Endothelial cell of umbilical vein (primary cell): ENCODE measurements at regions of chr3 and their contacts with region 1.

Region 1: DNA sequence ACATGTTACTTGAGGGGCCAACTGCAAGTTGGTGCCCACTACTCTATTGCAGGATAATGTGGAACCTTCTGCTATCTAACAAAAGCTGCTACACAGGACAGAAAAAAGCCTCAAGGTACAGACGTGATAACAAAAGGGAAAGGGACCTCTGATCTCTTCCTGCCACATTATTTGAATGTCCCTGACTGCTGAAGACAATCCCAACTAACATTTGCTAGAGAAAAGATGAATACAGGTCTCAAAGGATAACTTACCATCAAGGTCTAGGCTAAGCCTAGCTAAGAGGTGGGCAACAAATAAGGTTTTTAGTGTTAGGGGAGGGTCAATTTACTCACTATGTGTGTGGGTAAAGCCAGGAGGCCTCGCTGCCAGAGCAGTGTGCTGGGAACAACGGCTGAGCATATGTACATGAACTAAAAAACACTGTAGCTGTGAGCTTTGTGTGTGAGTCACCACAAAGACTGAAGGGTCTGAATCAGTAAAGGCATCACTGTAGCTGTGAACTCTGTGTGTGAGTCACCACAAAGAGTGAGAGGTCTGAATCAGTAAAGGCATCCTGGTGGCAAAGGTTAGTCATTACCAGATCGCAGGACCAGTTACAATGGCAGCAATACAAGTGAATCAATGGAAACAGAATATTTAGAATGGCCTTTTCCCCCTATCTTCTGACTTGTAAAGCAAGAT is 111.7 kb downstream of the LMLN start:
- DNase-seq: peak; percentile 79
- H3K4me3 ChIP-seq: no peak overlapping the region
- H3K27ac ChIP-seq: no peak overlapping the region
- H3K4me1 ChIP-seq: no peaks in the 10 kb centered on the region
- H3K27me3 ChIP-seq: peaks cover 13 to 36% of the 10 kb centered on the region in 2 experiments
- CTCF ChIP-seq: peak in 1 of 2 donors; percentile 20
- POLR2A ChIP-seq: no peak

Region 2: DNA sequence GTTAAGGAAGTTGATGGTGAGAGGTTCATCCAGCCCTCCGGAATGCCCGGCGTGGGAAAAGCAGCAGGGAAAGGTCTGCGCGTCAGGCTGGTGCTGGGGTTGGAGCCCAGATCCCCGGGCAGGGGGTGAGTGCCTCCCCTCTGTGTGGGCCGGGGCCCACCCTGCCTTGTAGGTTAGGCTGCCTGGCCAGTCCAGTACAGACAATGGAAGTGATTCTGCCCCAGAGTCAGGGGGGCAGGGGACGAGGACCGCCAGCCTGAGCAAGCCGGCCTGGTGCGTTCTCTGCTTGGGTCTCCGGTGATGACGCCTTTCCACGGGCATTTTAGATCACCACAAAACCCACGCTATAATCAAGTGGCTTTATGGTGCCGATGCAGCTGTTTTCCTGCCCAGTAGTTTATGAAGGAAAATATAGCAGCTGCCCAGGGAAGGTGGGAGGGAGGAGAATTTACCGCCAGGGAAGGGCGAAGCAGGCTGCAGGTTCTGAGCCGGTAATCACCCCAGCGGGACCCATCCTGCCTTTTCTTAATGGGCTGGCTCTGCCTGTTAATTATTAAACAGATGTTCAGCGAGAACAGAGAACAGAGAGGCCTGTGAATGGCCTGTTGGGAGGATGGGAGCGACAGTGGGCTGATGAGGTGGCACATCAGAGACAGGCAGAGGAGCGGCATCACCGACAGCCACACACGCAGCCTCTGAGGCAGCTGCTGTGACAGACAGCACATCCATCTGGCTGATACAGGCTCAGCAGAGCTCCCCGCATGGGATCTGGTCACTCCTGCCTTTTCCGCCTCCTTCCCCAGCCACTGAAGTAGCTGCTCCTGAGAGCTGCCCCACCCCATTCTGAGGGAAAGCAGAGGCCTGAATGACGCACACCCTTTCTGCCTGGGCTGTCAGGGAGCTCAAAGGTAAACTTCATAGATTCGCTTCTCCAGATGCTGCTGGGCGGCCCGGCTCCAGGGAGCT is 551.1 kb before region 1 on chr3:
- CTCF ChIA-PET with region 1: no interaction called
- POLR2A ChIA-PET with region 1: no interaction called
- dilution Hi-C with region 1: no loop called
- intact Hi-C with region 1: no loop called
- DNase-seq: no peak
- H3K4me3 ChIP-seq: no peak overlapping the region
- H3K27ac ChIP-seq: no peak overlapping the region
- H3K4me1 ChIP-seq: peaks cover 12% of the 10 kb centered on the region
- H3K27me3 ChIP-seq: no peaks in the 10 kb centered on the region
- CTCF ChIP-seq: no peak
- POLR2A ChIP-seq: no peak

Region 3: DNA sequence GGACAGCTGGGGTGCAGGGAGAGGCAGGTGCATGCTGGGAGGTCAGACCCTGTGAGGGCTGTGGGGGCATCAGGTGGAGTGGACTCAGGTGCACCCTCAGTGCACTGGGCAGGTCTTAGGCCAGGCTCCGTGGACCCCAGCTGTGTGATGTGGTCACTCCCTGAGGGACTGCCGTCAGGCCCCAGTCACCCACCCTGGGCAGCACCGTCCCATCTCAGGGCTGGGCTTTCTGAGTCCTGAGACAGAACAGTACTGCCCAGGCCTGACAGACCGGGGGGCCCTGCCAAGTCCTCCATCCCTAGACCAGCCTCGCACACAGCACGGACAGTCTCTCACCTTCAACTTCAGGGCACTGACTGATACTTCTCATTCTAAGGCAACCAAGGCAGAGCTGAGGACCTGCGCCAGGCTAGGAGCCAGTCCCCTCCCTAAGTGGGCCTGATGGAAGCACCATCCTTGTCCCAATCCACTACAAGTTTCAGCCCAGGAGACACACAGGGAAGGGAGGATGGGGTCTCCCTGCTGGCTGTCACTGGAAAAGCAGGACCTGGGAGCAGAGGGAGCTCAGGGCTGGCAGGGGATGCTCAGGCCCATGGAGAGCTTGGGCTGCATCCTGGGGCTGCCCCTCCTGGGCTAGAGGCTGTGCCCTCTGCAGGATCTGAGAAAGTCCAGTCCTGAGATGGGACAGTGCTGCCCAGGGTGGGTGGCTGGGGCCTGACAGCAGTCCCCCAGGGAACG is 25.5 kb before region 1 on chr3:
- CTCF ChIA-PET with region 1: interaction called, 10 read pairs
- POLR2A ChIA-PET with region 1: no interaction called
- dilution Hi-C with region 1: no loop called
- intact Hi-C with region 1: no loop called
- DNase-seq: no peak
- H3K4me3 ChIP-seq: no peak overlapping the region
- H3K27ac ChIP-seq: no peak overlapping the region
- H3K4me1 ChIP-seq: no peaks in the 10 kb centered on the region
- H3K27me3 ChIP-seq: no peaks in the 10 kb centered on the region
- CTCF ChIP-seq: no peak
- POLR2A ChIP-seq: no peak

Region 4: GRCh38 chr3:198061119-198062067 is 10.4 kb before region 1 on chr3:
- CTCF ChIA-PET with region 1: interaction called, 11 read pairs
- POLR2A ChIA-PET with region 1: no interaction called
- dilution Hi-C with region 1: no loop called
- intact Hi-C with region 1: no loop called
- DNase-seq: no peak
- H3K4me3 ChIP-seq: no peak overlapping the region
- H3K27ac ChIP-seq: no peak overlapping the region
- H3K4me1 ChIP-seq: no peaks in the 10 kb centered on the region
- H3K27me3 ChIP-seq: peaks cover 10 to 27% of the 10 kb centered on the region in 2 experiments
- CTCF ChIP-seq: no peak
- POLR2A ChIP-seq: no peak